Psoas muscle (tissue), 8 donors: ENCODE measurements at regions of chr6 and their contacts with region 1.

Region 1: DNA sequence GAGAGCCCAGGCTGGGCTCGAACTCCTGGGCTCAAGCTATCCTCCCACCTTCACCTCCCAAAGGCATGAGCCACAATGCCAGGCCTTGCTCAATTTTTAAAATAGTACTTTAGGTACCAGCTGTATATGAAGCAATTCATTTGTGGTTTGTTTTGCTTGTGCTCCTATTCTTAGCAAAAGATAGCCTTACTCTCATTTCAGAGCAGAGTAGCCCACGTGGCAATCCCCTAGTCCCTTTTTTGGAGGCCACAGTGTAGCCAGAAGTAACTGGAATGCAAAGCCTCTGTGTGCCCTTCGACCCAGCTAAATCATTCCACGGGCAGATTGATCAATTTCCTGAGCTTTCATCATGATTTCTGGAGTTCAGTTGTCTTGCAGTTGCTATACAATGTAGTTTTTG is 372.2 kb downstream of the NRN1 start:
- DNase-seq: no peak
- ATAC-seq: peak; percentile 87 to 96 (median 92)
- H3K4me3 ChIP-seq: no peak overlapping the region
- H3K27ac ChIP-seq: peak overlapping the region; percentile 47
- H3K4me1 ChIP-seq: peaks cover 17% of the 10 kb centered on the region
- H3K27me3 ChIP-seq: no peaks in the 10 kb centered on the region
- CTCF ChIP-seq: no peak

Region 2: DNA sequence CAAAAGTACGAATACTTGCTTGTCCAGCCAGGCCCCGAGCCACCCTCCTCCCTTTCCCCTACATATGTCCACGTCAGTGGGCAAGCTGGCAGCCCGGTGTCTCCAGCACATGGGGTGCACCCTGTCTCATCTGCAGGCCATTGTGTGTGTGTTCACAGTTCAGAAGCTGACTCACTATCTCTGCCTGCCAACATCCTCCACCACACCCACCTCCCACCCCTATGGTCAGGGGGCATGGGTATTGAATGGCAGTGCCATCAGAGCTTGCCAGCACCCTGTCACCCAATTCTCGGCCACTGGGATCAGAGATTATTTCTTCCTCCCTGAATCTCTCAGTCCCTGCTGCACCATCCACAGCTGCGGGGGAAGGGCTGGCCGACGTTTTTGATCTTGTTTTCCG is 177.5 kb before region 1 on chr6:
- intact Hi-C with region 1: loop called in 1 of 2 experiments (anchors 5 kb)
- DNase-seq: peak; percentile 57 to 89
- ATAC-seq: peak; percentile 88 to 97 (median 94)
- H3K4me3 ChIP-seq: peak overlapping the region; percentile 51
- H3K27ac ChIP-seq: peak overlapping the region; percentile 88
- H3K4me1 ChIP-seq: peaks cover 22% of the 10 kb centered on the region
- H3K27me3 ChIP-seq: no peaks in the 10 kb centered on the region
- CTCF ChIP-seq: no peak